CD4-positive, alpha-beta T cell (primary cell): ENCODE measurements at regions of chr15 and their contacts with region 1.

Region 1: DNA sequence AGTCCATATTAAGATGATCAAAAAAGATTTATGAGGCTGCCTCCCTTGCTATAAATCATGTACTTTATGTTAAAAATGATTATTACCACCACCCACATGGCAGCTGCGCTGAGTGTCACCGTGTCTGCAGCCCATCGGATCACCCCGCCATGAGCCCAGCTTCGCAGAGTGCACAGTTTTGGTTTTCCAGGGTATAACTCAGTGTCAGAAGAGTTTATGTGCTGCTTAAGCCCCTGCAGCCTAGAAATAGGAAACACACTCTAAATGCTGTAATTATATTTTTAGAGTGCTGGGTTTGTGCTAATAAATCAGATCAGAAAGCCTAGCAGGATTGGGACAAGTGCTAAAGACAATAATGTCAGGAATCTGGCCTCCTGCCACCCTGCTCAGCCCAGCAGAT is 54.7 kb upstream of the ONECUT1 start:
- DNase-seq: no peak
- ATAC-seq: no peak
- H3K4me3 ChIP-seq: no peak overlapping the region
- H3K4me3 Mint-ChIP-seq: no peak overlapping the region
- H3K27ac ChIP-seq: no peak overlapping the region
- H3K27ac Mint-ChIP-seq: no peak overlapping the region
- H3K4me1 ChIP-seq: no peaks in the 10 kb centered on the region
- H3K4me1 Mint-ChIP-seq: no peaks in the 10 kb centered on the region
- H3K27me3 ChIP-seq: no peaks in the 10 kb centered on the region
- H3K27me3 Mint-ChIP-seq: peaks cover 37% of the 10 kb centered on the region
- CTCF ChIP-seq: no peak

Region 2: DNA sequence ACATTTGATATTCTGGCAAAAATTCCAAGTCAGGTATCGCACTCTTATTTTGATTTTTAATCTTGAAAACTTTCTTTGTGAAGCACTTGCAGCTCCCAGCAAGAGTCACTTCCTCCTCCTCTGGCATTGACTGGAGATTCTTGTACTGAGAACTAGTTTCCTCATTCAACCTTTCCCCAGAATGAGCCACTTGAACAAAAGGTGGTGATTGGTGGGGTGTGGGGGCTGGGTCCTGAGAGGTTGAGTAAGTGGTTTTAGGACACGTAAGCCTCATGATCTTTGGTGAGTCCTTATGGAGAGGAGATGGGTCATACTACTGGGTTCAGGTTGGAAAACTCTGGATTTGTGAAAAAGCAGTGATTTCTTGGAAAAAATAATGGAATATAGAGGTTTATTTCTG is 22.3 kb before region 1 on chr15:
- CTCF ChIA-PET with region 1: no interaction called
- POLR2A ChIA-PET with region 1: no interaction called
- intact Hi-C with region 1: loop called in 1 of 2 experiments (anchors 1 kb)
- DNase-seq: no peak
- ATAC-seq: no peak
- H3K4me3 ChIP-seq: no peak overlapping the region
- H3K4me3 Mint-ChIP-seq: no peak overlapping the region
- H3K27ac ChIP-seq: no peak overlapping the region
- H3K27ac Mint-ChIP-seq: no peak overlapping the region
- H3K4me1 ChIP-seq: no peaks in the 10 kb centered on the region
- H3K4me1 Mint-ChIP-seq: no peaks in the 10 kb centered on the region
- H3K27me3 ChIP-seq: peaks cover 12 to 16% of the 10 kb centered on the region in 2 experiments
- H3K27me3 Mint-ChIP-seq: peaks cover 74% of the 10 kb centered on the region
- CTCF ChIP-seq: no peak

Region 3: GRCh38 chr15:52862677-52863076 is 17.9 kb after region 1 on chr15:
- CTCF ChIA-PET with region 1: no interaction called
- POLR2A ChIA-PET with region 1: no interaction called
- intact Hi-C with region 1: no loop called
- DNase-seq: no peak
- ATAC-seq: no peak
- H3K4me3 ChIP-seq: no peak overlapping the region
- H3K4me3 Mint-ChIP-seq: no peak overlapping the region
- H3K27ac ChIP-seq: no peak overlapping the region
- H3K27ac Mint-ChIP-seq: no peak overlapping the region
- H3K4me1 ChIP-seq: no peaks in the 10 kb centered on the region
- H3K4me1 Mint-ChIP-seq: no peaks in the 10 kb centered on the region
- H3K27me3 ChIP-seq: peaks cover 0 to 8% of the 10 kb centered on the region in 2 experiments
- H3K27me3 Mint-ChIP-seq: peaks cover 21% of the 10 kb centered on the region
- CTCF ChIP-seq: no peak

Region 4: DNA sequence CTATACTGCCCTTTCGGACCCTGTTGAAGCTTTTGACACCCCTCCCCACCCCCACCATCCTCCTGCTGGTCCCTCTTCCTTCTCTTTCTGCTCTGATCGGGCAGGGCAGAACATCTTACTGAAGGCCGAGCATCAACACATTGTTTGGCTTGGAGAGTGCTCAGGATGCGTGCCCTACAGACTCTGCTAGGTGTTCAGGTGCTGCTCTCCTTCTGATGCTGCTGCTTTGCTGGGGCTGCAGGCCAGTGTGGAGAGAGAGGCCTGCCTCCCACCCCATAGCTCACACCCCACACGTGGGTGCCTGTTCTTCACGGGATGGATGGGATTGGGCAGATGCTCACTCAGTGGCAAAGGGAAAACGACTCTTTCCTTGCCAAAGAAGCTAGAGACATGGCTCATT is 35.1 kb after region 1 on chr15:
- CTCF ChIA-PET with region 1: no interaction called
- POLR2A ChIA-PET with region 1: no interaction called
- intact Hi-C with region 1: no loop called
- DNase-seq: no peak
- ATAC-seq: no peak
- H3K4me3 ChIP-seq: no peak overlapping the region
- H3K4me3 Mint-ChIP-seq: no peak overlapping the region
- H3K27ac ChIP-seq: no peak overlapping the region
- H3K27ac Mint-ChIP-seq: no peak overlapping the region
- H3K4me1 ChIP-seq: no peaks in the 10 kb centered on the region
- H3K4me1 Mint-ChIP-seq: no peaks in the 10 kb centered on the region
- H3K27me3 ChIP-seq: peaks cover 0 to 9% of the 10 kb centered on the region in 2 experiments
- H3K27me3 Mint-ChIP-seq: peaks cover 34% of the 10 kb centered on the region
- CTCF ChIP-seq: no peak

Region 5: DNA sequence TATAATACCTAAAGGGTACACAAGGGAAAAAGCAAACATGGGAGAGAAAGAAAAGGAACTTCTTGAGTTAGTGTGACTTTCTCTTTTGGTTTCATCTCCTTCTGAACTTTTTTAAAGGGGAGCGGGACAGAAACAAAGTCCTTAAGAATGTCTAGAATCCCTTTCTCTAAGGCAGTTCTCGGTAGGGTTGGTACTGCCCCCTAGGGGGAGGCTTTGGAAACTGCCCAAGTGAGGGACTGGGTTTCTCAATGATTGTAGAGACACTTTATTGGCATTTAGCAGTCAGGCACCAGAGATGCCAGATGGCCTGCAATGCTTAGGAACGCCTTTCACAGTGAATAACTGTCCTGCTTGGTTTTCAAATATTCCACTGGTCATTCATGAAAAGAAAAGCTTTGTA is 742.0 kb after region 1 on chr15:
- CTCF ChIA-PET with region 1: no interaction called
- POLR2A ChIA-PET with region 1: no interaction called
- intact Hi-C with region 1: no loop called
- DNase-seq: no peak
- ATAC-seq: no peak
- H3K4me3 ChIP-seq: no peak overlapping the region
- H3K4me3 Mint-ChIP-seq: no peak overlapping the region
- H3K27ac ChIP-seq: no peak overlapping the region
- H3K27ac Mint-ChIP-seq: no peak overlapping the region
- H3K4me1 ChIP-seq: no peaks in the 10 kb centered on the region
- H3K4me1 Mint-ChIP-seq: no peaks in the 10 kb centered on the region
- H3K27me3 ChIP-seq: no peaks in the 10 kb centered on the region
- H3K27me3 Mint-ChIP-seq: no peaks in the 10 kb centered on the region
- CTCF ChIP-seq: no peak